ENCODE measurements at regions of chr11 and their contacts with region 1.

Region 1: GRCh38 chr11:9757809-9758636 is 94.1 kb downstream of the SWAP70 start:
- DNase-seq: no peak
- H3K4me3 ChIP-seq: peak overlapping the region; percentile 43
- CTCF ChIP-seq: peak; percentile 61

Region 2: GRCh38 chr11:9802291-9802861 is 44.4 kb after region 1 on chr11:
- CTCF ChIA-PET with region 1: interaction called, 5 read pairs
- POLR2A ChIA-PET with region 1: interaction called, 21 read pairs
- DNase-seq: peak; percentile 93
- H3K4me3 ChIP-seq: no peak overlapping the region
- CTCF ChIP-seq: no peak

Region 3: DNA sequence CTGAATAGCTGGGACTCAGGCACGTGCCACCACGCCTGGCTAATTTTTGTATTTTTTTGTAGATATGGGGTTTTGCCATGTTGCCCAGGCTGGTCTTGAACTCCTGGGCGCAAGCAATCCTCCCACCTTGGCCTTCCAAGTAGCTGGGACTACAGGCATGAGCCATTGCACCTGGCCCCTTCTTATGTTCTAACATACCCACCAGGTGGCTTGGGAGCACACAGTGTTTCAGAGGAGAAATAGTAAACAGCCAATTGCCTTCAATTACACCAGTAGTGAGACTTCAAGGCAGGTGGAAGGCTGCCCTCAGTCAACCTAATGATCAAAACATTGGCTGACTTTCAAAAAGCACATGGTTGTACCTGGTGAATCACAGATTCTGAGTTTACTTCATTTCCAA is 73.1 kb after region 1 on chr11:
- CTCF ChIA-PET with region 1: no interaction called
- POLR2A ChIA-PET with region 1: no interaction called
- DNase-seq: no peak
- H3K4me3 ChIP-seq: no peak overlapping the region
- CTCF ChIP-seq: no peak

Region 4: DNA sequence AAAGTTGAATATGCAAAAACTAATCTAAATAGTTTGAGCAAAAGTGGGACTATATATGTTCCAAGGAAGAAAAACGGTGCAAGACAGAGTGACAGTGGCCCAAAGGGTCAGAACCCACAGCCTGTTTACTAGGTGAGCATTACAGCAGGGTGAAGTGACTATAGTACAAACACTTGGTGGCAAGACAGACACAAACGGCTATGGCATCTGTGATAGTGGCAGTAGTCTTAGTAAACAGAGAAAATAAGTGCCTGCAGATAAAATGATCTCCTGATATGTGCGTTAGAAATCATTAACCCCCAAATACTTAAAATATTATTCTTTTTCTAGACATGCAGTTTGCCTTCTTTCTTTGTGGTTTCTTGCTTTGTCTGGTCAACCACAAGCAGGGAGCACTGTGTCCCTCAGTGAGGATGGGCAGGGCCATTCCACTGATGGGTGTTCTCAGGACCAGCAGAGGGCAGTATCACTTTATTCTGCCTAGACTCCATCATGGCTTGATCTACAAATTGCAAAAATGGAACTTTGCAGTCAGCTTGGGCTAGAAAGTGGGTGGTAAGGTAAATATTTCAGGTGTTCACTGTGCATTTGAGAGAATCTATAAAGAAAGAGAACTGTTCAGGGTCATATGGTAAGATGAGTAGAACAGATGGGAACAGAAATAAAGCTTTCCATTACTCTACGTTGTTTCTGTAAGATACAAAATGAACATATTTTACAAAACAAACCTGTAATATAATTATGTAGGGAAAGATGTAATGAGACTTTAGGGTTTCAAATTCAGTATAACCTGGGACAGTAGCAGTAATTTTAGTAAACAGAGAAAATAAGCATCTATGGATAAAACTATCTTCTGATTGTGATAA is 104.1 kb after region 1 on chr11:
- CTCF ChIA-PET with region 1: interaction called, 16 read pairs
- POLR2A ChIA-PET with region 1: interaction called, 15 read pairs
- DNase-seq: peak; percentile 33
- H3K4me3 ChIP-seq: no peak overlapping the region
- CTCF ChIP-seq: peak; percentile 67

Region 5: DNA sequence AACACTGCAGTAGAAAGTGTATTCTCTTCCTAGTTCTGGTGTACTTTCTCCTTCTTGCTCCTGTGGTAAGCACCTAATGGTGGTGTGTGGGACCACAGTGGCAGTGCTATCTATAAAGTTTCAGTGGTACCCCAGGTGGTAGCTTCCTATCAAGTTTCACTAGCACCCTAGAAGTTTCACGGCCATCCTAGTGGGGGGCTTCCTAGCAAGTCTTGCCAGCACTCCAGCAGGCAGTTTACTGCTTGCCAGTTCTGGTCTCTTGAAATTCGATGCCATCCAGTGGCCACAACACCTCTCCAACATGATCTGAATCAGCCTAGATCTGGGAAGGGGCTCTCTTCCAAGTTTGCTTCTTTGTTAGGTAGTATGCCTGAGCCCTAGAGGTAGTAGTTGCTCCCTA is 135.5 kb after region 1 on chr11:
- CTCF ChIA-PET with region 1: no interaction called
- POLR2A ChIA-PET with region 1: no interaction called
- DNase-seq: no peak
- H3K4me3 ChIP-seq: no peak overlapping the region
- CTCF ChIP-seq: no peak

Region 6: GRCh38 chr11:9972989-9973388 is 215.0 kb after region 1 on chr11:
- CTCF ChIA-PET with region 1: interaction called, 15 read pairs
- POLR2A ChIA-PET with region 1: interaction called, 4 read pairs
- DNase-seq: no peak
- H3K4me3 ChIP-seq: no peak overlapping the region
- CTCF ChIP-seq: peak; percentile 51